ENCODE measurements at regions of chr19 and their contacts with region 1.

Region 1: DNA sequence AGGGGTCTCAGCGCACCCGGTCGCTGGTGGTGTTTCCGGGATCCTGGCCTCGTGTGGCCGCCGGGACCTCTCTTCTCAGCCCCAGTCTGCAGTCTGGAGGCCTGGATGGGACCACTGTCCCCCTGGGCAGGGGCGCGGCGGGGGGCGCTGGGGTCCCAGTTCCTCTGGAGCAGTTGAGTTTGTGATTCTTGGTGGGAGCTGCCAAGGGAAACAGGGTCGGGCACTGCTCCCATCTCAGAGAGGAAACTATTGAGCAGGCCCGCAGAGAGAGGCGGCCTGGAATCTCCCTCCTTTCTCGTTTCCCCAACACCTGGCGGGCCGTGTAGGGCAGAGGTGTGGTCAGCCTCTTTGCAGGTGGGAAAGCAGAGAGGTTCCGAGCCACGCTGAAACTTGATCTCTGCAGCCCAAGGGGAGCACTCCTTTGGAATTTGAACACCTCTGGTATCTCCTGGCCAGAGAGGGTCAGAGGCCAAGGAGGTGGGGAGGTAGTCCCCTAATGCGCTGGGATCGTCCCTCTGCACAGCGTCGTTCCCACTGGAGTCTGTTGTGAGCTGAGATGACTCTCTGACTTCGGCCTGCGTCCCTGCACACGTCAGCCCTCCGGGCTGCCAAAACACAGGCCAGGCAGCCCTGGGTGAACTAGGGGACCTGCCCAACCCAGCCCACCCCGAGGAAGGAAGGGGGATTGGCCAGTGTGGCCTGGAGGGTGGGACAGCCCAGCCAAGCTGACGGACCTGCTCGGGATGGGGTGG is 741 bp downstream of the PLEKHF1 start:
- DNase-seq: peak; percentile 76 to 77
- H3K4me3 ChIP-seq: peak overlapping the region; percentile 95
- H3K27ac ChIP-seq: peak overlapping the region; percentile 69
- H3K4me1 ChIP-seq: peaks cover 72% of the 10 kb centered on the region
- H3K27me3 ChIP-seq: no peaks in the 10 kb centered on the region
- CTCF ChIP-seq: no peak

Region 2: DNA sequence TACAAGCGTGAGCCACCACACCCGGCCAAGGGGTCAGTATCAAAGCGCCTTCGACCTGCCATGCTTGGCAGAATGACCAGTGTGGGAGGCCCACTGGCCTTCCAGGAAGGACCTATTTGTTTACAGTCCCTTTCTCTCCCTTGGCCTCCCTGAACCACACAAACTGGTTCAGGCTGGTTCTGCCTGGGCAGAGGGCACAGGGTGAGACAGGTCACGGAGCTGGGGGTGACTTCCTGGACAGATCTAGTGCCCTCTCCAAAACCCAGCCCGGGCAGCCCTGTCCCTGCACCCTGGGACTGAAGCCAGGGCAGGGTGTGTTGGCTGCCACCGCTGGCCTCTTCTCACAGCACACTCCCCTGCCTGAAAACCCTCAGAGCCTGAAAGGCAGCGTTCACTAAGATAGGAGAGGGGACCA is 10.6 kb after region 1 on chr19:
- CTCF ChIA-PET with region 1: interaction called, 3 read pairs
- POLR2A ChIA-PET with region 1: no interaction called
- intact Hi-C with region 1: loop called (anchors 1 kb)
- DNase-seq: peak; percentile 75 to 85
- H3K4me3 ChIP-seq: no peak overlapping the region
- H3K27ac ChIP-seq: peak overlapping the region; percentile 45
- H3K4me1 ChIP-seq: peaks cover 34% of the 10 kb centered on the region
- H3K27me3 ChIP-seq: no peaks in the 10 kb centered on the region
- CTCF ChIP-seq: no peak

Region 3: GRCh38 chr19:29714953-29715700 is 49.1 kb after region 1 on chr19 and contains the start of gene C19orf12:
- CTCF ChIA-PET with region 1: interaction called, 3 read pairs
- POLR2A ChIA-PET with region 1: interaction called, 36 read pairs
- intact Hi-C with region 1: loop called (anchors 1 kb)
- DNase-seq: peak in 1 of 2 experiments; percentile 62
- H3K4me3 ChIP-seq: peak within 1 kb of the TSS; percentile 92
- H3K27ac ChIP-seq: peak within 1 kb of the TSS; percentile 66
- H3K4me1 ChIP-seq: peaks cover 7% of the 10 kb centered on the region
- H3K27me3 ChIP-seq: no peaks in the 10 kb centered on the region
- CTCF ChIP-seq: no peak
- total RNA-seq, gene C19orf12: 14.8 and 15.4 TPM in 2 replicates

Measured in PC-9 (cell line).